CD14-positive monocyte (primary cell): ENCODE measurements at regions of chr6 and their contacts with region 1.

Region 1: DNA sequence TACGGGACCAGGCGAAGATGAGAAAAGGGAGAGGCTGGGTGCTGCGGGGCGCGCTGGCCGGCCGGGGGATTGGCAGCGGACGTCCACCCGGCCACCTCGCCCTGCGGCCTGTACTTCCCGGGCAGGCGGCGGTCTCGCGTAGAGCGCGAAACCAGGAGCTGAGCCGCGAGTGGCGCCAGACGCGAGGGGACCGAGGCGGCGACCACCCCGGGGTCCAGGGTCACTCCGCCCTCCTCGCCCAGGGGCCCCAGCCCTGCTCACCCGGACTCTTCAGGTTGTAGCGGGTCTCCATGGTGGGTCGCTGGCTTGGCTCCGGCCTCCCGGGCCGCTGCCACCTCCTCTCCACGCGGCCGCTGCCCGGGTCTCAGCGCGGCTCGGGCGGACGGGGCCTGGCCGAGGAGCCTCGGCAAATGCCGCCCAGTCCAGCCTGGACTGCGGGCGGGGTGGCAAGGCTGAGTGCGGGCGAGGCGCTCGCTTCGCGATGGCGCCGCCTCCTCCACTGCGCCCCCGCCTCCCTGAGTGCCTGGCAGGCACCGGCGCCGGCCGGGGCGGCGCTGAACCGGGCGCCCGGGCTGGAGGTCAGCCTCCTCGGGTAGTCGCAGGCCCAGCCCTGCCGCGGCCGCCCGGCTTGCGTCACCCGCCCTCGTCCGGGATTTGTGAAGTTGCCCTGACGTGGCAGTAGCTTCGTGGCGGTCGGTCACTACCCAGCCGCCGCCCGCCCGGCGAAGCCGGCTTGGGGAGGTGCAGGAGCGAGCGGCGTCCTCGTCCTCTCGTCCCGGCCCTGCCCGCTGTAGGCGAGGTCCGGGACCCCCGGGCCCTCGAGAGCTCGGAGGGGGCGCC is at the start of gene UBE2J1:
- DNase-seq: peak; percentile 89 to 94 (median 94)
- H3K4me3 ChIP-seq: peak within 1 kb of the TSS; percentile 97 to 100 (median 97)
- H3K4me3 Mint-ChIP-seq: peak within 1 kb of the TSS; percentile 94 to 95
- H3K27ac ChIP-seq: peak within 1 kb of the TSS; percentile 77 to 91
- H3K27ac Mint-ChIP-seq: peak within 1 kb of the TSS; percentile 93 to 98 (median 96)
- H3K4me1 ChIP-seq: peaks cover 39 to 52% of the 10 kb centered on the region in 2 donors
- H3K4me1 Mint-ChIP-seq: peaks cover 58% of the 10 kb centered on the region
- H3K27me3 ChIP-seq: no peaks in the 10 kb centered on the region
- H3K27me3 Mint-ChIP-seq: peaks cover 0 to 7% (median 1%) of the 10 kb centered on the region in 3 donors
- CTCF ChIP-seq: no peak
- polyA plus RNA-seq, gene UBE2J1: 44.8 to 80.5 (median 66.1) TPM

Region 2: GRCh38 chr6:89613790-89614189 is 261.3 kb after region 1 on chr6:
- intact Hi-C with region 1: no loop called
- DNase-seq: no peak
- H3K4me3 ChIP-seq: no peak overlapping the region
- H3K4me3 Mint-ChIP-seq: no peak overlapping the region
- H3K27ac ChIP-seq: no peak overlapping the region
- H3K27ac Mint-ChIP-seq: no peak overlapping the region
- H3K4me1 ChIP-seq: no peaks in the 10 kb centered on the region
- H3K4me1 Mint-ChIP-seq: peaks cover 8% of the 10 kb centered on the region
- H3K27me3 ChIP-seq: no peaks in the 10 kb centered on the region
- H3K27me3 Mint-ChIP-seq: peaks cover 0 to 6% (median 5%) of the 10 kb centered on the region in 3 donors
- CTCF ChIP-seq: no peak

Region 3: DNA sequence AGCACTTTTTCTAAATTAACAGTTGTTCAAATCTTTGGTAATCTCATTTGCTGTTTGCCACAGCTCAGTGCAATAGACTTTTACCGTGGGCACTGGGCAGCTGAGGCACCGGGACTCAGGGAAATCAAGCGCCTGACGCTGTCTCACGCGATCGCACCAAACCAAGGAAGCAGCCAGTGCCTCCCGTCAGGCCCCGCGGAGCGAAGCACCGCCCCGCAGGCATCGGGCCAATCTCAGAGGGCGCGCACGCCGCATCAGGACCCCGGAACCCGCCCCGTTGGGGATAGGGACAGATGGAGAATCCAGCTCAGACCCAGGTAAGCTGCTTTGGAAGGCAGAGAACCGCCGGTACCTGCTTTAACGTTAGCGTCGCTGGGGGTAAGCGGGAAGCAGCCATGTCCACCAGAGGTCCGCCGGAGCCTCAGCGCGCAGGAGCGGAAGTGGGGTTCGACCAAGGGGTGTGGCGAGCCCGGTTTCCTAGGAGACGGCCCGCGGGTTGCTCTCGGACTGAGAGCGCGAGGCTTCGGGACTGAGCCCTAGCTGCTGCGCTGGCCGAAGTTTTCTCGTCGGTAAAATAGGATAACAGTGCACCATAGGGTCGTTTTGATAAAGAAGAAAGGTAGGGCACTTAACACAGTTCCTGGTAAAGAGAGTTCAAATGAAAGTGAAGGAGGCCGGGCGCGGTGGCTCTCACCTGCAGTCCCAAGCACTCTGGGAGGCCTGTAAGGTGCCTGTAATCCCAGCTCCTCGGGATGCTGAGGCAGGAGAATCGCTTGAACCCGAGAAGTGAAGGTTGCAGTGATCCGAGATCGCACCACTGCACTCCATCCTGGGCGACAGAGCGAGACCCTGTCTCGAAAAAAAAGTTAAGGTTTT is 286.1 kb after region 1 on chr6 and contains the start of gene LYRM2:
- intact Hi-C with region 1: loop called in 1 of 2 experiments (anchors 10 kb)
- DNase-seq: peak; percentile 91 to 93 (median 92)
- H3K4me3 ChIP-seq: peak within 1 kb of the TSS; percentile 57 to 91 (median 84)
- H3K4me3 Mint-ChIP-seq: peak within 1 kb of the TSS; percentile 92 to 94
- H3K27ac ChIP-seq: peak within 1 kb of the TSS; percentile 78 to 98
- H3K27ac Mint-ChIP-seq: peak within 1 kb of the TSS; percentile 96 to 98 (median 98)
- H3K4me1 ChIP-seq: peaks cover 14 to 16% of the 10 kb centered on the region in 2 donors
- H3K4me1 Mint-ChIP-seq: peaks cover 21% of the 10 kb centered on the region
- H3K27me3 ChIP-seq: no peaks in the 10 kb centered on the region
- H3K27me3 Mint-ChIP-seq: no peaks in the 10 kb centered on the region
- CTCF ChIP-seq: no peak
- polyA plus RNA-seq, gene LYRM2: 13.2 to 64.0 (median 58.1) TPM

Region 4: DNA sequence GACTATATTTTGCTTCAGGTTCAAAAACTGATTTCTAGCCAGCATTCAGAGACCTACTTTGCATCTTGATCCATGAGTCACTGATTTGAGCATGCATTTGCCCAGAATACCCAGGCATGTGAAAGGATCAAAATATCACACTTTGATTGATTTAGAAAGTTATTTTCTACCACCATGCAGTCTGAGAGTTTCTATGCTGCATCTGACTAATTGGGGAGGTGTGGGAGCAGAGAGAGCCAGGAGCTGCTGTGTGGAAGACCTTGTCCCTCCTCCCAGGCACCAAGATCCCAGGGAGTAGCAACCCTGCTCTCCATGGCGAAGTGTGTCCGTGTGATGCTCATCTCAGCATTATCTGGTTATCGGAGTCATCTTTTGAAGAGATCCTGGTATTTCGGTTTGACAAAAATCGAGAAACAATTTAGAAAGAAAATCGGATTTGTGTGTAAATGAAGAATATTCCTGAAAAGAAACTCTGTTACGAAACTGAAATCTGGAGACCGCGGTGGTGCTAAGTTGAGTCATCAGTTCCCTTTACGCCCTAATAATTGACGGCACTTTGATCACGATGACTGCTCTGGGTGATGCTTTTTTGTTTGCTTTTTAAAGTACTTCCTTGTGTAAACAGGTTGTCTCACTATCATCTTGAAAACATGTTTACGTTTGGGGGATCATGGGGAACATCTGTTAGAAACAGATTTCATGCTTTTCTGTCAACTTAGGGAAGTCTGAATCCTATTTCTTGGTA is 750.7 kb after region 1 on chr6:
- intact Hi-C with region 1: loop called in 1 of 2 experiments (anchors 10 kb)
- DNase-seq: peak; percentile 82 to 92 (median 89)
- H3K4me3 ChIP-seq: peak overlapping the region in 1 of 3 experiments; percentile 45
- H3K4me3 Mint-ChIP-seq: peak overlapping the region; percentile 50 to 66
- H3K27ac ChIP-seq: no peak overlapping the region
- H3K27ac Mint-ChIP-seq: peak overlapping the region; percentile 76 to 94 (median 82)
- H3K4me1 ChIP-seq: peaks cover 64 to 69% of the 10 kb centered on the region in 2 donors
- H3K4me1 Mint-ChIP-seq: peaks cover 78% of the 10 kb centered on the region
- H3K27me3 ChIP-seq: no peaks in the 10 kb centered on the region
- H3K27me3 Mint-ChIP-seq: no peaks in the 10 kb centered on the region
- CTCF ChIP-seq: no peak